Astrocyte of the cerebellum (primary cell): ENCODE measurements at regions of chr5 and their contacts with region 1.

Region 1: DNA sequence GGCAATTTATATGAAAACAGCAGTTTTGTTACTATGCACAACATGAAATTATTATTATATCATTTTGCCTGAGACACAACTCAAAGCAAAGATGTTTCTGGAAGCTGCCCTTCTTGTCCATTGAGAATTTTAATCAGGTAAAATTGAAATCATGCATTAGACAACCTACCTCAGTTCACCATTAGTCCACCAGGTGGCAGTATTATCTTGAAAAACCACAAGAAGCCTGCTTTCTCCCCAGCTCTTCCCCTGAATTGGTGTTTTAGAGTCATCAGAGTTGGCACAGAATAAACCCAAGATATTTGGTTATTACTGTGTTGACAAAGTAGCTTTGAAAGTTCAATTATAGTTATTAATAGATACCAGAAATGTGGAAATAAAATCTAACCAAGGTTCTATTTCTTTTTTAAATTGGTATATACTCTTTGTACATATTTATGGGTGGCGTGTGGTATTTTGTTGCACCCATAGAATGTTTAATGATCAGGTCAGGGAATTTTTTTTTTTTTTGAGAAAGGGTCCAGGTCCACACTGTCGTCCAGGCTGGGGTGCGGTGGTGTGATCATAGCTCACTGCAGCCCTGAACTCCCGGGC is 25.7 kb downstream of the UTP15 start:
- DNase-seq: peak; percentile 91
- H3K4me3 ChIP-seq: no peak overlapping the region
- CTCF ChIP-seq: peak; percentile 60

Region 2: DNA sequence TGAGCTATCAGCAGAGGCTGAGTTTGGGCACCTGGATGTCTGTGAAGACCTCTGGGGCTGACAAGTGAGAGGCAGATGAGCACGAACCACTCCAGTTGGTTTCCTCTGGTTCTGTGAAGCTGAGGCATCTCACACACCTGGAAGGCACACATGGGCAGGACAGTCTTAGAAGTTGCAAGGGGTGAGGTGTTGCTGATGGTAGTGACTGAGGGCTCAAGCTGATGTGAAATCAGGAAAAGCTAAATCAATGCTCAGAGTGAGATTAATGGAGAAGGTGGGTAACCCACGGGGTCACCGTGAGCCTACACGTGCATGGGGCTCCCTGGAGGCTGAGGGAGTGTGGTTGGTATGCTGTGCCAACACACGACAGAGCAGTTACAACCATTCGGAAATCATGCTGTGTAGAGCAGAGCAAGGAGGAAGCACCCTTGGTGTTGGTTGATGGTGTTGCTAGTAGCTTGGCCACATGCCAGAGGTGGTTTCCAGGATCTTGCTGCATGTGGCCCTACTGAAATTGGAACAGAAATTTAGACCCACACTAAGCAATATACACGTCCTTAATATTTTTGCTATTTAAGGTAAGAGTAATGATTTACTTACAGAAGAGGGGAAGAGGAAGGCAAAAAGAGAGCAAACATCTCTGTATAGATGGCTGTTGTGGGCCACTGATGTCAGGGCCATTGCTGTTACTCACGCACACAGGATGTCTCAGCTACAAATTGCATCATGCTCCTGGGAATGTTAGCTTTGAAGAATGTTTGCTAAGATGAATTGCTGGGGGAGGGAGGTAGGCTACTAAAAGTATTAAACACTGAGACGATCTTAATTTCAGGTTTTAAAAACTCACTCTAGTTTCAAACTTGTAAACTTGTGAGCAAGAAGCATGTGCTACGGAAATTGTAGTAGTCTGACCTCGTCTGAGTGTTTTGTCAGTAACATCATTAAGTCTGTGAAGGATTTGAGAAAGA is 205.2 kb after region 1 on chr5:
- in situ Hi-C with region 1: loop called (anchors 5 kb)
- DNase-seq: peak; percentile 73
- H3K4me3 ChIP-seq: no peak overlapping the region
- CTCF ChIP-seq: no peak

Region 3: DNA sequence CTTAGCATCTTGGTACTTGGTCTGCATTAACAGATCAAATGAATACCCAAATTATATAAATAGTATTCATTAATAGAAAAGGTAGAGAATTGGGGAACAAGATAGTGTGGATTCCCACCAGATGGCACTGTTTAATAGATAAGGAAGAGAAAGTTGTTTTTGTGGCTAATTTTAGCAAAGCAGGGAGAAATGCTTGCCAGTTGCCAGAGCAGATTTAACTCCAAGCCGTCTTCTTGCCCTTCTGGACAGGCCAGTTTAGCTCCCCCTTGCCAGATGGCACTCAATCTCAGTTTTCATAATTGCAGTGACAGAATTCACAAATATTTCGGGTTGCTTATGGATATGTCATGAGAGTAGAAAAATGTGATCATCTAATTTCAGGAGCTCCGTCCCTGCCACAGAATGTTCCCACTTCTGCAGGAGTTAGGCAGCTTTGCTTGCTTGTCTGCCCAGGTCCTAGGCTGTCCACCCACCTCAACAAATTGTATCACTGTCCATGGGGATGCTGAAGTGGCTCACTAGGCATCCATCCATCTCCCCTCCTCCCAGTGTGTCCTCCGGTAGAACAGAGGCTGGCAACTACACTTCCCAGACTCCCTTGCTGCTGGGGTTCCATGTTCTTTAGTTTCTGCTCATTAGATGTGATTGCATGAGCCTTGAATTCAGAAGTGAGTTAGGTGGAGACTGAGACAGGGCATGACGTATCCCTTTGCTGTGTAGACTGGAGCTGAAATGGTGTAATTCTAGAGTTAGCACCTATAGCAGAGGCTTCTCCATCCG is 1082.0 kb after region 1 on chr5:
- in situ Hi-C with region 1: loop called (anchors 25 kb)
- DNase-seq: peak; percentile 39
- H3K4me3 ChIP-seq: no peak overlapping the region
- CTCF ChIP-seq: peak; percentile 21